CD4-positive, alpha-beta T cell (primary cell): ENCODE measurements at regions of chr1 and their contacts with region 1.

Region 1: DNA sequence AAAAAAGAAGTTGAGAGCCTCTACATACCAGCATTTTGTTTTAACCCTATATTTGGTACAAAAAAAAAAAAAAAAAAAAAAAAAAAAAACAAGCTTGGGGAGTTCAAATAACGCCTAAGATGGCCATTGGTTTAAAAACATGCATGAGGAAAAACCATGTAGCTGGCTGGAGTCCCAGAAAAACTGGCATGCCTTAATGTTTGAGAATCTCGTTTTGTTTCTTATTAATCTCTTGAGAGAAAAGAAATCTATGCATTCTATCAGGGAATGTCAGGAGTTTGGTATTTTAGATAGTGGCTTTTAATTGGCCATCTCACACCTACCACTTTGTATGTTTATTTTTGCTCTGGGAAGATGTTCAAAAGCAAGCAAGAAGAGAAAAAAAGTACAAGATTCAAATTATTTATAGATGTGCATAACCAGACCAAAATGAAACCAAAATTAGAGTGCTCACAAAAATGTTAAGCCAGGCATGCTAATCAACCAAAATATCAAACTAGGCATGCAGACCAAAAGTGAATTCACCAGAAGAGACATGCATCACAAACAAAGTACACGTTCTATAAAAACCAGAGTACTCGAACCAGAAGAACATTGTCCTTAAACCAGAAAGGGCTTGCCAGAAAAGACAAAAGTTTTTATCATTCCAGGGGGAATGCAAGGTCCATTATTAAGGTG is 156.6 kb downstream of the AK5 start:
- DNase-seq: peak in 1 of 14 experiments; percentile 26
- ATAC-seq: no peak
- H3K4me3 ChIP-seq: no peak overlapping the region
- H3K4me3 Mint-ChIP-seq: peak overlapping the region; percentile 75
- H3K27ac ChIP-seq: no peak overlapping the region
- H3K27ac Mint-ChIP-seq: peak overlapping the region; percentile 74
- H3K4me1 ChIP-seq: peaks cover 7% of the 10 kb centered on the region
- H3K4me1 Mint-ChIP-seq: peaks cover 35% of the 10 kb centered on the region
- H3K27me3 ChIP-seq: no peaks in the 10 kb centered on the region
- H3K27me3 Mint-ChIP-seq: no peaks in the 10 kb centered on the region
- CTCF ChIP-seq: no peak

Region 2: DNA sequence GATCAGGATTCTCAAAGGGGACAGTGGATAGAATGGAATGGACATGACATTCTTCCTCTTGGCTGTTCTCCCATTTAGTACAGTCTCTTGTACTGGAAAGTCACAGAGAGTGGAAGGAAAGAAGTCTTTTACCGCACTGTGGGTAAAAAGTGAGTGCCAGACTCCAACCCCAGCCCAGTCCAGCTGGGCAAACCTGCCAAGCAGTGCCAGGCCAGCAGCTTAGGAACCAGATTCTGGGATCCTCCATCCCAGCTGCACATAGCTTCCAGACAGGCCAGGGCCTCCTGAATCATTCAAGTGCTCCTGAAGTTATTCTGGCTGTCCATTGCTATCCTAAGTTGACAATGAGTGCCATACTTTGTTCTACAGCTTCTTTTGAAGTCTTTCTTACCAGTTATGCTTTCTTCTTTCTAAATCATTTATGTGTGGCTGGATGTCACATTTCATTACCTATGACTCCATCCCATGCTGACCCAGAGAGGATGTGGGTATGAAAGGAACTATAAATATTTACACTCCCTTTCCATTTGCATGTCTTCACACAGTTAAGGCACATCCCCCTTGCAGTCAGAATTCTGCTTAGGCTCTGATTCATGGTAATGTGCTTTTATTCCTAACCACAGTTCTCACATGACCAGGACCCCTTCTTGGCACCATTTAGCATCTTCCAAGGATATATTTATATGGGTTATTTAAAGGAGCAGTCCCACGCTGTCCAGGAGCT is 67.6 kb before region 1 on chr1:
- CTCF ChIA-PET with region 1: no interaction called
- POLR2A ChIA-PET with region 1: no interaction called
- intact Hi-C with region 1: loop called in 1 of 2 experiments (anchors 10 kb)
- DNase-seq: no peak
- ATAC-seq: no peak
- H3K4me3 ChIP-seq: no peak overlapping the region
- H3K4me3 Mint-ChIP-seq: no peak overlapping the region
- H3K27ac ChIP-seq: no peak overlapping the region
- H3K27ac Mint-ChIP-seq: no peak overlapping the region
- H3K4me1 ChIP-seq: peaks cover 6% of the 10 kb centered on the region
- H3K4me1 Mint-ChIP-seq: peaks cover 28% of the 10 kb centered on the region
- H3K27me3 ChIP-seq: no peaks in the 10 kb centered on the region
- H3K27me3 Mint-ChIP-seq: no peaks in the 10 kb centered on the region
- CTCF ChIP-seq: no peak

Region 3: DNA sequence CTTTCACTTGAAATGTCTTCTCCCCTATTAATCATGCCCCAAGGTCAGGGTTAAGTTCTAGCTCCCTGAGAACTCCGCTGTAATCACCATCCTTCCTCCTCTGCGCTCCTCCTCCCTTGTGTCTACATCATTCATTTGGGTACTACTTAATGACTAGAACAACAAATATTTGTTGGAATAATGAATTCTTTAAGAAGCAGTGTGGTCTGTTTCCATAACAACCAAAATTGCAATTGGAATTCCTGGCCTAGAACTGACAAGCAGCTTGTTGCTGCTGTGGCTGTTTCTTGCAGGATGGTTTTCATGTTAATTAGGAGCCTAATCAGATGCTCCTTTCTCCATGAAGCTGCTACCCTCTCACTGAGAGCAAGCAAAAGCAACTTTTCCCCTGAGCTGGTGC is 51.5 kb after region 1 on chr1:
- CTCF ChIA-PET with region 1: no interaction called
- POLR2A ChIA-PET with region 1: no interaction called
- intact Hi-C with region 1: loop called in 1 of 2 experiments (anchors 10 kb)
- DNase-seq: no peak
- ATAC-seq: no peak
- H3K4me3 ChIP-seq: no peak overlapping the region
- H3K4me3 Mint-ChIP-seq: no peak overlapping the region
- H3K27ac ChIP-seq: no peak overlapping the region
- H3K27ac Mint-ChIP-seq: no peak overlapping the region
- H3K4me1 ChIP-seq: no peaks in the 10 kb centered on the region
- H3K4me1 Mint-ChIP-seq: no peaks in the 10 kb centered on the region
- H3K27me3 ChIP-seq: no peaks in the 10 kb centered on the region
- H3K27me3 Mint-ChIP-seq: no peaks in the 10 kb centered on the region
- CTCF ChIP-seq: no peak

Region 4: GRCh38 chr1:77533660-77534305 is 95.4 kb after region 1 on chr1:
- CTCF ChIA-PET with region 1: no interaction called
- POLR2A ChIA-PET with region 1: no interaction called
- intact Hi-C with region 1: loop called (anchors 2 to 10 kb)
- DNase-seq: peak; percentile 37 to 80 (median 55)
- ATAC-seq: peak; percentile 66
- H3K4me3 ChIP-seq: no peak overlapping the region
- H3K4me3 Mint-ChIP-seq: peak overlapping the region; percentile 17
- H3K27ac ChIP-seq: no peak overlapping the region
- H3K27ac Mint-ChIP-seq: peak overlapping the region; percentile 13
- H3K4me1 ChIP-seq: peaks cover 13% of the 10 kb centered on the region
- H3K4me1 Mint-ChIP-seq: peaks cover 7% of the 10 kb centered on the region
- H3K27me3 ChIP-seq: no peaks in the 10 kb centered on the region
- H3K27me3 Mint-ChIP-seq: no peaks in the 10 kb centered on the region
- CTCF ChIP-seq: peak; percentile 91